Endothelial cell of umbilical vein (primary cell): ENCODE measurements at regions of chr12 and their contacts with region 1.

Region 1: GRCh38 chr12:64796208-64796845 is 28.1 kb upstream of the TBC1D30 start:
- DNase-seq: peak; percentile 93
- H3K4me3 ChIP-seq: no peak overlapping the region
- H3K27ac ChIP-seq: no peak overlapping the region
- H3K4me1 ChIP-seq: no peaks in the 10 kb centered on the region
- H3K27me3 ChIP-seq: no peaks in the 10 kb centered on the region
- CTCF ChIP-seq: peak; percentile 63 to 68
- POLR2A ChIP-seq: no peak

Region 2: DNA sequence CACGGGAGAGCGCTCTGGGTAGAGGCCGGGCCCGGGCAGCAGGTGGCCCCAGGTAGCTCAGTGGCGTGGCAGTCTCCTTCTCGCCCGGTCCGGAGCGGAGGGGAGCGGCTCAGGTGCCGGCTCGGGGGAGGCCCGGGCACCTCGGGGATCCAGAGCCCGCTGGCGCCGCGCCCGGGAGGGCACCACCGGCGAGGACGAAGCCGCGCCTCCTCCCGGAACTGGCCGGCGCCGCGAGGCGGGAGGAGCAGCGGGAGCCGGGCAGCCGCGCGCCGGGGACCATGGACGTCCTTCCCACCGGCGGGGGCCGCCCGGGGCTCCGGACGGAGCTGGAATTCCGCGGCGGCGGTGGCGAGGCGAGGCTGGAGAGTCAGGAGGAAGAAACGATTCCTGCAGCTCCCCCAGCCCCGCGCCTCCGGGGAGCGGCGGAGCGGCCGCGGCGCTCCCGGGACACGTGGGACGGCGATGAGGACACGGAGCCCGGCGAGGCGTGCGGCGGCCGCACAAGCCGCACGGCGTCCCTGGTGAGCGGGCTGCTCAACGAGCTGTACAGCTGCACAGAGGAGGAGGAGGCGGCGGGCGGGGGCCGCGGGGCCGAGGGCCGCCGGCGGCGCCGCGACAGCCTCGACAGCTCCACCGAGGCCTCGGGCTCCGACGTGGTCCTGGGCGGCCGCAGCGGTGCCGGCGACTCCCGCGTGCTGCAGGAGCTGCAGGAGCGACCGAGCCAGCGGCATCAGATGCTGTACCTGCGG is 15.6 kb before region 1 on chr12:
- CTCF ChIA-PET with region 1: interaction called, 47 read pairs
- POLR2A ChIA-PET with region 1: no interaction called
- dilution Hi-C with region 1: no loop called
- intact Hi-C with region 1: no loop called
- DNase-seq: peak; percentile 43
- H3K4me3 ChIP-seq: peak overlapping the region; percentile 23 to 64 (median 49)
- H3K27ac ChIP-seq: no peak overlapping the region
- H3K4me1 ChIP-seq: peaks cover 16% of the 10 kb centered on the region
- H3K27me3 ChIP-seq: peaks cover 4 to 19% of the 10 kb centered on the region in 2 experiments
- CTCF ChIP-seq: no peak
- POLR2A ChIP-seq: no peak

Region 3: DNA sequence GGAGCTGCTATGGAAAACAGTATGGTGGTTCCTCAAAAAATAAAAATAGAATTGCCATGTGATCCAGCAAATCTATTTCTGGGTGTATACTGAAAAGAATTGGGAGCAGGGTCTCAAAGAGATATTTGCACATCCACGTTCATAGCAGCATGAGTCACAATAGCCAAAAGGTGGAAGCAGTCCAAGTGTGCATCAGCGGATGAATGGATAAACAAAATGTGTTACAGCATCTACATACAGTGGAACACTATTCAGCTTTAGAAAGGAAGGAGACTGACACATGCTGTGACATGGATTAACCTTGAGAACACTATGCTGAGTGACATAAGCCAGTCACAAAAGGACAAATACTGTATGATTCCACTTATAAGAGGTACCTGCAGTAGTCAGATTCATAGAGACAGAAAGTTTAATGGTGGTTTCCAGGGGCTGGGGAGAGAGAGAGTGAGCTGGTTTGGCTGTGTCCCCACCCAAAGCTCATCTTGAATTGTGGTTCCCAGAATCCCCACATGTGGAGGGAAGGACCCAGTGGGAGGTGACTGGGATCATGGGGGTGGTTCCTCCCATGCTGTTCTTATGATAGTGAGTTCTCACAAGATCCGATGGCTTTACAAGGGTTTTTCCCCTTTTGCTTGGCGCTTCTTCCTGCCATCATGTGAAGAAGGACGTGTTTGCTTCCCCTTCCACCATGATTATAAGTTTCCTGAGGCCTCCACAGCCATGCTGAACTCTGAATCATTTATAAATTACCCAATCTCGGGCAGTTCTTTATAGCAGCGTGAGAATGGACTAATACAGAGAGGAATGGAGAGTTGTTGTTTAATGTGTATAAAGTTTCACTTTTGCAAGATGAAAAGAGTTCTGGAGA is 10.5 kb after region 1 on chr12:
- CTCF ChIA-PET with region 1: interaction called, 20 read pairs
- POLR2A ChIA-PET with region 1: no interaction called
- dilution Hi-C with region 1: no loop called
- intact Hi-C with region 1: no loop called
- DNase-seq: peak; percentile 63
- H3K4me3 ChIP-seq: no peak overlapping the region
- H3K27ac ChIP-seq: no peak overlapping the region
- H3K4me1 ChIP-seq: no peaks in the 10 kb centered on the region
- H3K27me3 ChIP-seq: no peaks in the 10 kb centered on the region
- CTCF ChIP-seq: no peak
- POLR2A ChIP-seq: no peak

Region 4: GRCh38 chr12:65106948-65107347 is 310.6 kb after region 1 on chr12:
- CTCF ChIA-PET with region 1: interaction called, 20 read pairs
- POLR2A ChIA-PET with region 1: no interaction called
- dilution Hi-C with region 1: no loop called
- intact Hi-C with region 1: no loop called
- DNase-seq: peak; percentile 9
- H3K4me3 ChIP-seq: no peak overlapping the region
- H3K27ac ChIP-seq: no peak overlapping the region
- H3K4me1 ChIP-seq: no peaks in the 10 kb centered on the region
- H3K27me3 ChIP-seq: peaks cover 1 to 4% of the 10 kb centered on the region in 2 experiments
- CTCF ChIP-seq: peak in 1 of 2 donors; percentile 24
- POLR2A ChIP-seq: no peak

Region 5: GRCh38 chr12:65121049-65121955 is 325.0 kb after region 1 on chr12 and contains the start of gene WIF1:
- CTCF ChIA-PET with region 1: interaction called, 22 read pairs
- POLR2A ChIA-PET with region 1: no interaction called
- dilution Hi-C with region 1: no loop called
- intact Hi-C with region 1: loop called (anchors 1 kb)
- DNase-seq: peak; percentile 22
- H3K4me3 ChIP-seq: peak within 1 kb of the TSS; percentile 12 to 21 (median 13)
- H3K27ac ChIP-seq: no peak within 1 kb of the TSS
- H3K4me1 ChIP-seq: peaks cover 2% of the 10 kb centered on the region
- H3K27me3 ChIP-seq: peaks cover 36 to 67% of the 10 kb centered on the region in 2 experiments
- CTCF ChIP-seq: peak; percentile 59 to 69
- POLR2A ChIP-seq: no peak
- total RNA-seq, gene WIF1: not detected in 2 replicates

Region 6: DNA sequence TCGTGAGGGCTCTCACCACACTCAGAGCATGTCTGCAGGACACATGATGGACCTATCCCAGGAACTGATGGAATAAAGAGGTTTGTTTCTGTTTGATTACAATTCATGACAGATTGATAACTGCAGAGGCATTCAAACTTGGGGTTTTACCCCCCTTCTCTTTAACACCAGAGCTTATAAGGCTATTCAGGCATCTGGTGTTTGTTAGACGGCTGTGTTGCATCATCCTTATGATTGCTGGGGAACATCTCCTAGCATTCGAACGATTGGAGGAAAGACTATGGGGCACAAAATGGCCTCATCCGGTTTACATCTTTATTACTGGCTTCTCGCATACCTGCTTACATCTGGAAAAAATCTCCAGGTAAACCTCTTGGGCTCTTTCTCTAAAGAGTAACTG is 673.9 kb after region 1 on chr12:
- CTCF ChIA-PET with region 1: no interaction called
- POLR2A ChIA-PET with region 1: no interaction called
- dilution Hi-C with region 1: no loop called
- intact Hi-C with region 1: no loop called
- DNase-seq: no peak
- H3K4me3 ChIP-seq: no peak overlapping the region
- H3K27ac ChIP-seq: no peak overlapping the region
- H3K4me1 ChIP-seq: no peaks in the 10 kb centered on the region
- H3K27me3 ChIP-seq: no peaks in the 10 kb centered on the region
- CTCF ChIP-seq: no peak
- POLR2A ChIP-seq: no peak